PC-9 (cell line): ENCODE measurements at regions of chr2 and their contacts with region 1.

Region 1: DNA sequence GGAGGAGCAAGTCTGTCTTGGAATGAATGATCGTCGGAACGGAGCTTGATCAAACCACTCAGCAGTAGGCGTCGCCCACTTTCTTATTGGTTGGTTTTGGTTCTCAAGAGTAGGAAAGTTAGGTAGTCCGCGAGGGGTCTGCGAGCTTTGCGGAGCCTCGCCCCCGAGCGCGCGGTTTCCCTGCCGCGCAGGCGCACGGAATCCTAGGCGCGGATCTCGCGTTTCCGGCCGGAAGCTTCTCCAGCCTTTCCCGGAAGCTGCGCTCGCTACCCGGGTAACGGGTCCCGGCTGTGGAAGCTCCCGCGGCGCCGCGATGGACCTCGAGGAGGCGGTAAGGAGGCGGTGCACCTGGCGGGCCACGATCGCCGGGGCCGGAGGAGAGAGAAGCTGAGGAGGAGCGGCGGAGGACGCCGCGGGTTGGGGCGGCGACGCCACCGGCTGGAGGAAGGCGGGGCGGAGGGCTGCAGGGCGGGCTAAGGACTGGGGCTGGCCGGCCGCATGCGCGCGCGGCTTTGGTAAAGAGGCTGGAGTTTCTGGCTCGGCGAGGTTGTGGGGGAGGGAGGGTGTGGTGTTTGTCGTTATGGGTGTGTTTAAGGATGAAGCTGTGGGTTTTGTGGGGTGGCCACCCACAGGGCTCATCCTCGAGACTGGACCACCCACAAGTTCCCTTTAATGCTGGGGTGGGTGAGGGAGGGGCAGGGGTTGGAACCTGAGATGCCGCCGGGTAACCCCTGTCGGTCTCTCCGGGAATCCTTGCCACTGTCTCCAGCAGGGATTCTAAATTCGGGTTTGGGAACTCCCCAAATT is at the start of gene TAF1B:
- DNase-seq: peak; percentile 91 to 92
- H3K4me3 ChIP-seq: peak within 1 kb of the TSS; percentile 68
- H3K27ac ChIP-seq: peak within 1 kb of the TSS; percentile 86
- H3K4me1 ChIP-seq: peaks cover 50% of the 10 kb centered on the region
- H3K27me3 ChIP-seq: no peaks in the 10 kb centered on the region
- CTCF ChIP-seq: no peak; the same call in 1 of the 2 replicates
- total RNA-seq, gene TAF1B: 23.8 and 24.8 TPM in 2 replicates

Region 2: DNA sequence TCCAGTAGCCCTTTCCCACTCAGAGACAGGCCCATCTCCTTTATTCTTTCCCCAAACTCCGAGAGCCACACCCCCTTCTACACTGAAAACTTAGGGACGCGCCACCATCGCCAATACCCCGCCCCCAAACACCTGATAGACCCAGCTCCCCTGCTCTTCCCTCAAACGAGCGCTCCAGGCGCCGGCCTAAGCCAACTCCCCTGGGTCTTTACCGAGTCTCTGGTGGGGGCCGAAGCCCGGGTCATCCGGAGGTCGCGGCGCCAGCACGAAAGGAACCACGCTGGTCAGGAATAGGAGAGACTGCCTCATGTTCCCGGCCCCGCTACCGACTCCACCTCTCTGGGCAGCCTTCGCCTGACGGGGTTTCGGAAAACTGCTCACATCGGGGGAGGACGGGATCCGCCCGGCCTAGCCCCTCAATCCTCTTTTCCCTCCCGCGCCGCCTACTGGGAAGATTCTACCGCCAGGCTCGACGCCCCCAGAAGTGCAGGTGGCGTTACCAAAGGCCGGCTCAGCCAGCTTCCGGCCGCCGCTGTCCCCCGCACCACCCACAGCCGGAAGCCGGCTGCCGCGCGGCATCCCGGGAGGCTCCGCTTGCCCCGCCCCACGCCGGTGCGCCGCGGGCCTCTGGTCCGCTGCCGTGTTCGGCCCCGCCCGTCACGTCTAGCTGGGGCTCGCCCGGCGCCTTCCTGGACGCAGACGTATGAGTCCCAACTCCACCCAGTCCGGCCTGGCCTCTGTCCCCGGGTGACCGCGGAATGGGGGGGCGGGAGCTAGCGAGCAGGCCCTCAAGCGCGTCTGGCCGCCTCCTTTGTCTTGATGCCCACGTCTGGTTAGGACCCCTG is 287.9 kb before region 1 on chr2 and contains the start of gene ADAM17:
- CTCF ChIA-PET with region 1: interaction called, 17 read pairs
- POLR2A ChIA-PET with region 1: interaction called, 6 read pairs
- intact Hi-C with region 1: no loop called
- DNase-seq: peak; percentile 90 to 96
- H3K4me3 ChIP-seq: peak within 1 kb of the TSS; percentile 83
- H3K27ac ChIP-seq: peak within 1 kb of the TSS; percentile 96
- H3K4me1 ChIP-seq: peaks cover 74% of the 10 kb centered on the region
- H3K27me3 ChIP-seq: no peaks in the 10 kb centered on the region
- CTCF ChIP-seq: peak; percentile 35; the same call in 1 of the 2 replicates
- total RNA-seq, gene ADAM17: 53.5 and 65.0 TPM in 2 replicates

Region 3: GRCh38 chr2:9703085-9703641 is 140.3 kb before region 1 on chr2:
- CTCF ChIA-PET with region 1: no interaction called
- POLR2A ChIA-PET with region 1: no interaction called
- intact Hi-C with region 1: no loop called
- DNase-seq: peak; percentile 91 to 95
- H3K4me3 ChIP-seq: no peak overlapping the region; the same call in 1 of the 2 replicates
- H3K27ac ChIP-seq: peak overlapping the region; percentile 87
- H3K4me1 ChIP-seq: peaks cover 46% of the 10 kb centered on the region
- H3K27me3 ChIP-seq: no peaks in the 10 kb centered on the region
- CTCF ChIP-seq: no peak